AG04450 (cell line): ENCODE measurements at regions of chr11 and their contacts with region 1.

Region 1: GRCh38 chr11:94968334-94968958 is 4.9 kb downstream of the CWC15 start:
- DNase-seq: no peak
- H3K4me3 ChIP-seq: no peak overlapping the region
- H3K27ac ChIP-seq: no peak overlapping the region
- H3K27me3 ChIP-seq: no peaks in the 10 kb centered on the region
- CTCF ChIP-seq: peak; percentile 74

Region 2: DNA sequence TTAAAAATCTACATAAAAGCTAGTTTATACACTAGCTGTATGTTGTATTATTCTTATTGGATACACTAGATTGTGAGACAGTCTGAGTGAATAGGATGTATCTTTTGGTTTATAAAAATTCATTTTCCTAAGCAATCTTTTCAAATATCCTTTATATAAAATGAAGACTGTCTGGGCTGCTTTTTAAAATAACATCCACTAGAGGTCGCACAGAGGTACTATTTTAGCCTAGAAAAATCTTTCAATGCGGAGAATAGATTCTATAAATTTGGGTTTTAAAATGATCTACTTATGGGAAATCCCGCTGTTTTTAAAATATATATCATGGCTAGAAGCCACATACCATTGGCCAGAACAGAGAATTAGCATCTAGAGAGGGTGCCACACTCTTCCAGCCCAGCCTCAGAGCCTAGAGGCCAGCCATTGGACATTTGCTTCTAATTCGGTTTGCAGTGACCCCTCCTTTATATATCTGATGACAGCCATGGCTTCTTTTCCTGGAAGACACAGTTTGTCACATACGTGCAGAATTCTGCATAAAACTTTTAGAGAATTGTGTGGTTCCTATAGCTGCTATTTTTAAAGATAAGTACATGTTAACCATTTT is 448.9 kb before region 1 on chr11:
- CTCF ChIA-PET with region 1: interaction called, 13 read pairs
- POLR2A ChIA-PET with region 1: no interaction called
- DNase-seq: no peak
- H3K4me3 ChIP-seq: no peak overlapping the region
- H3K27ac ChIP-seq: no peak overlapping the region
- H3K27me3 ChIP-seq: peaks cover 16% of the 10 kb centered on the region
- CTCF ChIP-seq: peak; percentile 65

Region 3: GRCh38 chr11:94741022-94741679 is 227.3 kb before region 1 on chr11:
- CTCF ChIA-PET with region 1: interaction called, 13 read pairs
- POLR2A ChIA-PET with region 1: no interaction called
- DNase-seq: no peak
- H3K4me3 ChIP-seq: peak overlapping the region; percentile 62
- H3K27ac ChIP-seq: no peak overlapping the region
- H3K27me3 ChIP-seq: no peaks in the 10 kb centered on the region
- CTCF ChIP-seq: peak; percentile 68

Region 4: GRCh38 chr11:94768602-94769541 is 199.6 kb before region 1 on chr11:
- CTCF ChIA-PET with region 1: interaction called, 10 read pairs
- POLR2A ChIA-PET with region 1: no interaction called
- DNase-seq: no peak
- H3K4me3 ChIP-seq: peak overlapping the region; percentile 95
- H3K27ac ChIP-seq: peak overlapping the region; percentile 75
- H3K27me3 ChIP-seq: no peaks in the 10 kb centered on the region
- CTCF ChIP-seq: no peak

Region 5: DNA sequence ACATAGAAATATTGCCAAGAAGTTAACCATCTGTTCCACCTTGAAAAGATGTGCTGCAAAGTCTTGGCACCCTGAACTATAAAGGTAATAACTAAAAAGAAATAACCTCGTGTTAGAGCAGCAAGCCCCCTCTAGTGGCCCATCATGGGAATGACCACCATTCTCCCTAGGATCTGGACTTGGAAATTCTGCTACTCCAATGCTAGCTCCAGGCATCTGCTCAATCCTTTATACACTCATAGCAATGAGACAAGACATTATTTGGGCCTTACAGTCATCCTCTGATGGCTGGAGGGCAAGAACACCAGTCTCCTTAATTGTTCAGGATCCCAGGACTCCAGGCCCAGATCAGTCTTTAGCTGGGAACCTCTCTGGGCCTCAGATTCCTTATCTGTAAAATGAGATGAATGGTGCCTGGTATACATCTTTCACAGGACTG is 71.1 kb before region 1 on chr11:
- CTCF ChIA-PET with region 1: interaction called, 20 read pairs
- POLR2A ChIA-PET with region 1: no interaction called
- DNase-seq: no peak
- H3K4me3 ChIP-seq: no peak overlapping the region
- H3K27ac ChIP-seq: no peak overlapping the region
- H3K27me3 ChIP-seq: no peaks in the 10 kb centered on the region
- CTCF ChIP-seq: peak; percentile 96

Region 6: GRCh38 chr11:94910779-94911178 is 57.7 kb before region 1 on chr11:
- CTCF ChIA-PET with region 1: interaction called, 17 read pairs
- POLR2A ChIA-PET with region 1: no interaction called
- DNase-seq: peak; percentile 61
- H3K4me3 ChIP-seq: no peak overlapping the region
- H3K27ac ChIP-seq: peak overlapping the region; percentile 69
- H3K27me3 ChIP-seq: no peaks in the 10 kb centered on the region
- CTCF ChIP-seq: no peak

Region 7: GRCh38 chr11:94958121-94958696 is 10.2 kb before region 1 on chr11:
- CTCF ChIA-PET with region 1: interaction called, 20 read pairs
- POLR2A ChIA-PET with region 1: interaction called, 5 read pairs
- DNase-seq: no peak
- H3K4me3 ChIP-seq: no peak overlapping the region
- H3K27ac ChIP-seq: peak overlapping the region; percentile 54
- H3K27me3 ChIP-seq: no peaks in the 10 kb centered on the region
- CTCF ChIP-seq: no peak